ENCODE measurements at regions of chr6 and their contacts with region 1.

Region 1: DNA sequence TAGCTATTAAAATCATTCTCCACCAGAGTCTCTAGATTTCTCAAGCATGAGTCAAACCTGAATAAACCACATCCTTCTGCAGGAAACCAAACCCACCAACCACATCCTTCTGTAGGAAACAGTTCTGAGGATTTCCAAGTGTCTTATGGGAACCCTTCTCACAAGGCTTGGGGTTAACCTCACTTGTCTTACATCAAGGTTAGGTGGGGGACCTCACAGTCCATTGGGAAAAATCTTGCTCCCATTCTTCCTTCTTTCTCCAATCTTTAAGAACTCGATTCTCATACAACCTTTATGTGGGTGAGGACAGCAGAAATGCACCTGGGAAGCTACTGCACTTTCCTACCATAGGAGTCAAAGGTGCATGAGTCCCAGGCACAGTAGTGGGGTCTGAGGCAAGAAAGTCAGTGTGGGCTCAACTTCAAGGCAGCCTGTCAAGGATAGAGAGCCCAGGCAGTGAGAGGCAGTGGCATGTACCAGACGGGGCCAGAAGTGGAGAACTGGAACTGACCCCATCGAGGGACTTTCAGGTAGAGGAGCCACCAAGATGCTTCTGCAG is 114.5 kb downstream of the SLC22A3 start:
- DNase-seq: peak; percentile 44 to 90
- ATAC-seq: peak; percentile 69 to 94 (median 86)
- H3K4me3 ChIP-seq: no peak overlapping the region
- H3K4me3 Mint-ChIP-seq: peak overlapping the region; percentile 83
- H3K27ac ChIP-seq: peak overlapping the region; percentile 61
- H3K27ac Mint-ChIP-seq: peak overlapping the region in 1 of 2 donors; percentile 90
- H3K4me1 ChIP-seq: peaks cover 65% of the 10 kb centered on the region
- H3K4me1 Mint-ChIP-seq: peaks cover 30 to 34% of the 10 kb centered on the region in 2 donors
- H3K27me3 ChIP-seq: no peaks in the 10 kb centered on the region
- H3K27me3 Mint-ChIP-seq: no peaks in the 10 kb centered on the region
- CTCF ChIP-seq: no peak

Region 2: GRCh38 chr6:159726918-159727716 is 735.5 kb before region 1 on chr6 and contains the start of gene WTAP:
- intact Hi-C with region 1: loop called (anchors 2 kb)
- DNase-seq: peak; percentile 92 to 99
- ATAC-seq: peak; percentile 85 to 94 (median 85)
- H3K4me3 ChIP-seq: peak within 1 kb of the TSS; percentile 92
- H3K4me3 Mint-ChIP-seq: peak within 1 kb of the TSS; percentile 94
- H3K27ac ChIP-seq: peak within 1 kb of the TSS; percentile 95
- H3K27ac Mint-ChIP-seq: peak within 1 kb of the TSS; percentile 97 to 98
- H3K4me1 ChIP-seq: peaks cover 14% of the 10 kb centered on the region
- H3K4me1 Mint-ChIP-seq: peaks cover 32 to 52% of the 10 kb centered on the region in 2 donors
- H3K27me3 ChIP-seq: no peaks in the 10 kb centered on the region
- H3K27me3 Mint-ChIP-seq: no peaks in the 10 kb centered on the region
- CTCF ChIP-seq: no peak
- total RNA-seq, gene WTAP: 141 to 167 (median 164) TPM

Region 3: GRCh38 chr6:160520043-160520904 is 57.6 kb after region 1 on chr6:
- intact Hi-C with region 1: loop called (anchors 5 kb)
- DNase-seq: peak; percentile 78 to 83
- ATAC-seq: peak; percentile 83 to 89 (median 85)
- H3K4me3 ChIP-seq: peak overlapping the region; percentile 55
- H3K4me3 Mint-ChIP-seq: peak overlapping the region; percentile 98
- H3K27ac ChIP-seq: peak overlapping the region; percentile 70
- H3K27ac Mint-ChIP-seq: peak overlapping the region; percentile 90 to 94
- H3K4me1 ChIP-seq: peaks cover 13% of the 10 kb centered on the region
- H3K4me1 Mint-ChIP-seq: peaks cover 42 to 52% of the 10 kb centered on the region in 2 donors
- H3K27me3 ChIP-seq: no peaks in the 10 kb centered on the region
- H3K27me3 Mint-ChIP-seq: no peaks in the 10 kb centered on the region
- CTCF ChIP-seq: peak; percentile 92

Region 4: GRCh38 chr6:160789263-160790027 is 326.8 kb after region 1 on chr6:
- intact Hi-C with region 1: no loop called
- DNase-seq: peak in 1 of 2 donors; percentile 32
- ATAC-seq: peak in 1 of 3 donors; percentile 50
- H3K4me3 ChIP-seq: no peak overlapping the region
- H3K4me3 Mint-ChIP-seq: no peak overlapping the region
- H3K27ac ChIP-seq: no peak overlapping the region
- H3K27ac Mint-ChIP-seq: peak overlapping the region in 1 of 2 donors; percentile 48
- H3K4me1 ChIP-seq: no peaks in the 10 kb centered on the region
- H3K4me1 Mint-ChIP-seq: peaks cover 4 to 6% of the 10 kb centered on the region in 2 donors
- H3K27me3 ChIP-seq: no peaks in the 10 kb centered on the region
- H3K27me3 Mint-ChIP-seq: no peaks in the 10 kb centered on the region
- CTCF ChIP-seq: no peak